Activated T-helper 2 cell treated with anti-CD3 and anti-CD28 coated beads, Interferon-gamma antibody, Interleukin-2, Interleukin-4, amounts not matched to agents 10 μg/mL and 5 μg/mL and 100 μg/mL, durations not matched to agents 14 hours and 24 hours and 36 hours (primary cell): ENCODE measurements at regions of chr18 and their contacts with region 1.

Region 1: GRCh38 chr18:3593904-3594661 is 144.1 kb downstream of the TGIF1 start:
- DNase-seq: peak; percentile 84
- H3K4me3 Mint-ChIP-seq: peak overlapping the region; percentile 88
- H3K27ac Mint-ChIP-seq: peak overlapping the region; percentile 98
- H3K4me1 Mint-ChIP-seq: peaks cover 49% of the 10 kb centered on the region
- H3K27me3 Mint-ChIP-seq: no peaks in the 10 kb centered on the region

Region 2: DNA sequence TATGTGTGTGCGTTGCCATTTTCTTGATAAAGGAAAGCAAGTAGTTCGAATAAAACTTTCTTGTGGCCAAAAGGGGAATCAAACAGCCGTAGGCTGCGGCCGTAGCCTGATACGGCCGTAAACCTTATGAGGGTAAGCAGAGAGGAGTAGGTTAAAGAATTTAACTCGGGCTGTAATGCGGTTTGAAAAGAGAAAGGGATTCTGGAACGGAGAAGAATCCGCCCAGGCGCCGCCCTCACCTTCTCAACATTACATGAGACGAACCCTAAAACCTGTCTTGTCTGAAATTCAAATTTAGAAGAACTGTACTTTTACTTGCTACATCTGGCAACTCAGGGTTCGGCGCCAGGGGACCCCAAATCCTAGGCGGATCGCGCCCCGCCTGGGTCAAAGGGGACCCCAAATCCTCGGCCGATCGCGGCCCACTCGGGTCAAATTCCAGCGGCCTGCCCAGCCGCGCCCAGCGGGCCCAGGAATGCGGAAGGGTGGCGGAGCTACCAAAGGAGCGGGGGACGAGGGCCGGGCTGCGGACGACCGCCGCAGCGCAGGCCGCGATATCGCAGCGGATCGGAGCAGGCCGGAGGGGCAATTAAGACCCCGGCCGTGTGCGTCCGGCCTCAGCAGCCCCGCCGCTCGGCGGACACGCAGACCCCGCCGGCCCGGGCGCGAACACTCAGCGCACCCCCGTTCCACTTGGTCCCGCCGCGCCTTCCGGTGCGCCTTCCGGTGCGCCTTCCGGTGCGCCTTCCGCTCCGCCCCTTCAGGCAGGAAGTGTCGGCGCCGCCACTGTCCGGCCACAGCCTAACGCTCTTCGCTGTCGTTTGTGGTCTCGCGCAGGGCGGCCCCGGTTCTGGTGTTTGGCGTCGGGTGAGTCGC is 332.5 kb before region 1 on chr18 and contains the start of gene MYL12B:
- intact Hi-C with region 1: loop called (anchors 2 kb)
- DNase-seq: peak; percentile 77
- H3K4me3 Mint-ChIP-seq: peak within 1 kb of the TSS; percentile 97
- H3K27ac Mint-ChIP-seq: peak within 1 kb of the TSS; percentile 99
- H3K4me1 Mint-ChIP-seq: peaks cover 69% of the 10 kb centered on the region
- H3K27me3 Mint-ChIP-seq: no peaks in the 10 kb centered on the region
- total RNA-seq, gene MYL12B: 243 and 245 TPM in 2 replicates

Region 3: GRCh38 chr18:3297025-3297984 is 296.8 kb before region 1 on chr18:
- intact Hi-C with region 1: loop called (anchors 1 kb)
- DNase-seq: peak; percentile 91
- H3K4me3 Mint-ChIP-seq: peak overlapping the region; percentile 87
- H3K27ac Mint-ChIP-seq: peak overlapping the region; percentile 59
- H3K4me1 Mint-ChIP-seq: peaks cover 7% of the 10 kb centered on the region
- H3K27me3 Mint-ChIP-seq: peaks cover 35% of the 10 kb centered on the region

Region 4: DNA sequence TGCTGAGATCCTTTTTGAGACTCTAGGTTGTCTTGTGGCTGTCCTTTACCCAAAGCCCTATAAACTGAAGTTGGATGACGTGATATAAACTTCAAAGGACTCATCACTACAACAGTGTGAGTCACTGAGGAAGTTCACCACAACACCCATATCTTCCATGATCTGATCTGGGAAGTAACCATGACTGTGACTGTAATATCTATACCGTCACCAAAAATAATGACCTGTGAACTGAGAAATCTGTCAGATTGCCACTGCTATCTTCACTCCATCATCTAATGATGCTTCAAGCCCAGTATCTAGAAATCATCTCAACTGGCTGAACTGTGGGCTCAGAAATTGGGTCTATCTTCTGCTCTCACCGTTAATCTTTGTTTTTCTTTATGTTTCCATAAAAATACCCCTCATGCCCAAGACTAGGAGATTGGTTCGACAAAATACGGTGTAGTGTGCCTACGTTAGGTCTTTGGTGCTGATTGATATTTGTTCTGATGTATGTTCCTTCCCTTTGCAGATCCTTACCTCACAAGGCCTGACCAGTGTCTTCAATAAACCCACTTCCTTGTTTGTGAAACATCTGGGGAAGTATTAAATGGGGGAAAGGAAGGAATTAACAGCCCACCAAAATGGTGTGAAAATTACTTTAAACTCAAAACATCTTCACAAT is 253.9 kb before region 1 on chr18:
- intact Hi-C with region 1: loop called (anchors 5 kb)
- DNase-seq: no peak
- H3K4me3 Mint-ChIP-seq: no peak overlapping the region
- H3K27ac Mint-ChIP-seq: peak overlapping the region; percentile 48
- H3K4me1 Mint-ChIP-seq: peaks cover 19% of the 10 kb centered on the region
- H3K27me3 Mint-ChIP-seq: no peaks in the 10 kb centered on the region

Region 5: DNA sequence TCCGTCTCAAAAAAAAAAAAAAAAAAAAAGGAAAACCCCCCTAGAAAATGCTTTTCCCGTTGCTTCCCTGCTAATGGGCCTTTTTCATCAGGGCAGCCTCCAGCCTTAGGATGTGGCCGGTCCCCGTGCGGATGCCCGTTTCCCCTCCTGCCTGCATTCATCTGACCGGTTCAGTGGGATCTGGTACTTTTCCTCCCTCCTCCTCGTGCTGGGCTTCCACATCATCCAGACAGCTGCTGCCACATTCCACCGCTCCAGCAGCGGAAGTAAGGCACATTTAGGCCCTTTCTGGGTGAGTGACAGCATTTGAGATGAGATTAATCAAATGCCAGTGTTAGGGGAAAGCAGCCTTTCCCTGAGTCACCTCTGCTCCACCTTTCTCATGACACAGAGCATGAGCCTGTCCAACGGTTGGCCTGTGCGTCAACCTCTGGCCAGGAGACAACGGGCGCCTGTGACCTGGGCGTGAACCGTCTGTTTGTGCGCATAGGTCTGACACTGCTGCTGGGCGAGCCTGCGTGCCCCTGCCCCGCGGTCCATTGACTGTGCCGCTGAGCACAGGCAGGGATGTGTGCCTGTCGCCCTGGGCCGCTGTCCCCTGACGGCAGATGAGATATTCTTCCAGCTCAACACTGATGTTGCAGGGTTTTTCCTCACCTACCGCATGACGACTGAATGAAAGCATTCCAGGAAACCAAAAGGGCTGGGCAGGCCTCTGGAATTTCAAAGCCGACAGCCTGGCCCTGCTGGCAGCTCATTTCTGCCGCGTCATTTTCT is 29.9 kb after region 1 on chr18:
- intact Hi-C with region 1: loop called (anchors 1 kb)
- DNase-seq: no peak
- H3K4me3 Mint-ChIP-seq: peak overlapping the region; percentile 60
- H3K27ac Mint-ChIP-seq: peak overlapping the region; percentile 92
- H3K4me1 Mint-ChIP-seq: peaks cover 37% of the 10 kb centered on the region
- H3K27me3 Mint-ChIP-seq: no peaks in the 10 kb centered on the region

Region 6: DNA sequence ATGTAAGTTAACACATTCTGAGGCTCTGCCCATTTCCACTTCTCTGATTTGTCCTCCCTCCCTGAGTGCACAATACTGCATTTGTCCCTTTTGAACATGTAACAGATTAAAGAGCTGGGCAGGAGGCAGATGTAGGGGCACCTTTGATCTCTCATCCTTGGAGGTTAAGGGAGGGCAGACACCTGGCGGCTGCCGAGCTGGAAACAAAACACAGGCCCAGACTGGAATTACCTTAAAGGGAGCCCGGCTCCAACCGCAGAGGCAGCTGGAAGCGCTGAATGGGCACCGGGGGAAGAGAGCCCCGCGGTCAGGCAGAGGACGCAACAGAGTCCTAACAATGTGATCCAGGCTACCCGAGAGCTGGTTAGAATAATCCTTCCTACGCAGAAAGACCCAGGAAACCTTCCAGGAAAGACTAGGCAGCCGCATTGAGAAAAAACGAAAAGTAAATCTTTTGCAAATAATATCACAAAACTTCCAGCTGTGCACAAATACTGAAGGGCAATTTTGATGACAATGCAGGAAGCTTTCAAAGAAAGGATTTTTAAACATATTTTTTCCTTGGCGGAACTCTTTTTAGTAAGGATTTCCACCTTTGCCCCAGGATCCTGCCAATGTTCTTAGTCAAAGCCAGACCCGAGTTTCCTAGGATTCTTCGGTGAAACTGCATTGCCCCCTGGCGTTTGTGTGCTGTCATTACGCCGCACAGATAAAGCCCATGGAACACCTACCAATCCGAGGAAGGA is 71.9 kb after region 1 on chr18:
- intact Hi-C with region 1: loop called (anchors 1 kb)
- DNase-seq: peak; percentile 55
- H3K4me3 Mint-ChIP-seq: peak overlapping the region; percentile 47
- H3K27ac Mint-ChIP-seq: no peak overlapping the region
- H3K4me1 Mint-ChIP-seq: peaks cover 23% of the 10 kb centered on the region
- H3K27me3 Mint-ChIP-seq: peaks cover 8% of the 10 kb centered on the region